ENCODE measurements at regions of chr17 and their contacts with region 1.

Region 1: GRCh38 chr17:4980644-4981216 is 6.7 kb downstream of the CAMTA2 start:
- DNase-seq: no peak
- H3K4me3 ChIP-seq: no peak overlapping the region
- H3K27ac ChIP-seq: no peak overlapping the region
- H3K4me1 ChIP-seq: peaks cover 0 to 10% (median 5%) of the 10 kb centered on the region in 4 donors
- H3K27me3 ChIP-seq: no peaks in the 10 kb centered on the region
- CTCF ChIP-seq: peak; percentile 61 to 88 (median 80)
- EP300 ChIP-seq: no peak
- POLR2A ChIP-seq: no peak

Region 2: DNA sequence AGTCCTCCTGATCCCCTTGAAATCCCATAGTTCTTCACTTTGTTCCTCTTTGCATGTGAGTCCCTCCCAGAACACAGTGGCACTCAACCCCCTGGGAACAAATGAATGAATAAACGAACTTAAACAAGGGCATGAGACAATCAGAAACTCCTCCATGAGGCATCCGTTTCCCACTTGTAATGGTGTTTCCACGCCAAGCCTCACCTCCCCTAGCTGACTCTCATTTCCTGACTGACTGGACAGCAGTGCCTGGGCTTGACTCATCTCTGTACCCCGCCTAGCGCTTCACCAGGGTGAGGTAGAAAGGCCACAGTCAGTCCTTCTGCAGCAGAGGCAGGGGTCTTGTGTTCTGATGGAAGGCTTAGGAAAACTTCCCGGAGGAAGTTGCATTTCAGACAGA is 31.2 kb after region 1 on chr17:
- intact Hi-C with region 1: no loop called
- DNase-seq: no peak
- H3K4me3 ChIP-seq: no peak overlapping the region
- H3K27ac ChIP-seq: no peak overlapping the region
- H3K4me1 ChIP-seq: no peaks in the 10 kb centered on the region
- H3K27me3 ChIP-seq: no peaks in the 10 kb centered on the region
- CTCF ChIP-seq: no peak
- EP300 ChIP-seq: no peak
- POLR2A ChIP-seq: no peak

Region 3: GRCh38 chr17:5055543-5055942 is 74.8 kb after region 1 on chr17:
- intact Hi-C with region 1: loop called (anchors 5 kb)
- DNase-seq: no peak
- H3K4me3 ChIP-seq: no peak overlapping the region
- H3K27ac ChIP-seq: no peak overlapping the region
- H3K4me1 ChIP-seq: peaks cover 0 to under 1% (median 0%) of the 10 kb centered on the region in 4 donors
- H3K27me3 ChIP-seq: no peaks in the 10 kb centered on the region
- CTCF ChIP-seq: no peak
- EP300 ChIP-seq: no peak
- POLR2A ChIP-seq: no peak